Activated CD4-positive, alpha-beta memory T cell treated with anti-CD3 and anti-CD28 coated beads, Interleukin-2, amount 10 ng/mL, durations not matched to agents 7 days and 5 days (primary cell): ENCODE measurements at regions of chr10 and their contacts with region 1.

Region 1: GRCh38 chr10:28991326-28992270 is 297.3 kb upstream of the LYZL1 start:
- DNase-seq: peak; percentile 23
- H3K4me3 Mint-ChIP-seq: no peak overlapping the region
- H3K27ac Mint-ChIP-seq: no peak overlapping the region
- H3K4me1 Mint-ChIP-seq: no peaks in the 10 kb centered on the region
- H3K27me3 Mint-ChIP-seq: no peaks in the 10 kb centered on the region

Region 2: DNA sequence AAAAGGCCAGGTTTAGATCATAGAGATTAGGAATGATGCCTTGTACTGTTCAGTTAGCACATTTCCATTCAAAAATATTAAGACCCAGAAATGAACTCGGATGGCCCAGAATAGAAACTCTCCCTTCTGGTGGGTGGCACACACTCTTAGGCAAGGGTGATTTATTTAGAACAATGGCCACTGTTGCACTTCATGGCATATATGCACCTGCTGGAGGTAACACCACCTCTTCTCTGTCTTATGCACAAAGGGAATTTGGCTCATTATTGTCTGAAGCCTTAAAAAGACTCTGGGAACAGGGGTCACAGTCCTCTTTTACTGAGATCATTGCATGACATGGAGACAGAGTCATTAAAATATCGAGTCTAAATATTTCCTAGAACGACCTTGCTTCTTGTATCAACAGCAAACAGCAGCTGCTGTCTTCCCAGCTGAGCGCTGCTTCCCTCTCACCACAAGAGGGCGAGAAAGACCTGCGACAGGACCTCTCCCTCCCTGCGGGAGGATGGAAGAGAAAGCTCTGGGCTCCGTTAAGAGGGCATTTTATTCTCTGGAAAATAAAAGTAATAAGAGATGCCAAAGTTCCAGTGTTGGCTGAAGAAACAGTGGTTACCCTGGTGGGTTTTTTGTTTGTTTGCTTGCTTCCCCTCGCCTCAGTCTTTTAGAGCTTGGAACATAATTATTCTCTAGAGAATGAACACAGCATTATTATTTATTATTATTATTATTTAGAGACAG is 327.9 kb before region 1 on chr10:
- CTCF ChIA-PET with region 1: interaction called, 30 read pairs
- POLR2A ChIA-PET with region 1: no interaction called
- DNase-seq: peak; percentile 70
- H3K4me3 Mint-ChIP-seq: no peak overlapping the region
- H3K27ac Mint-ChIP-seq: no peak overlapping the region
- H3K4me1 Mint-ChIP-seq: peaks cover 11% of the 10 kb centered on the region
- H3K27me3 Mint-ChIP-seq: peaks cover 36% of the 10 kb centered on the region

Region 3: DNA sequence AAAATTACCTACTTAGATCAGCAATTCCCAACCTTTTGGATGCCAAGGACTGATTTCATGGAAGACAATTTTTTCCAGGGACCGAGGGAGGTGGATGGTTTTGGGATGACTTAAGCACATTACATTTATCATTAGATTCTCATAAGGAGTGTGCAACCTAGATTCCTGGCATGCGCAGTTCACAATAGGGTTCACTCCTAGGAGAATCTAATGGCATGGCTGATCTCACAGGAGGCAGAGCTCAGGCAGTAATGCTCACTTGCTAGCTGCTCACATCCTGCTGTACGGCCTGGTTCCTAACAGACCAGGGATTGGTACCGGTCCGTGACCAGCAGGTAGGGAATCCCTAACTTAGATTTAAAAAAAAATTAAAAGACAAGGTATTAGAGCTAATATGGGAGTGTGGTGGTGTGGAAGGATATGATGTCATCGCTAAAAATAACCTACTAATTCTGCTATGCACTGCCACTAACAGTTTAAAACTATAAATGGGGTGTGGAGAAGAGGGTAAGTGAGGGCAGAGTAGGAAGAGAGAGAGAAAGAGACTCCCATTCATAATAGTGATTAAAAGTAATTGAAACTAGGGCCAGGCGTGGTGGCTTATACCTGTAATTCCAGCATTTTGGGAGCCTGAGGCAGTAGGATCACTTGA is 31.6 kb before region 1 on chr10:
- CTCF ChIA-PET with region 1: no interaction called
- POLR2A ChIA-PET with region 1: no interaction called
- DNase-seq: no peak
- H3K4me3 Mint-ChIP-seq: no peak overlapping the region
- H3K27ac Mint-ChIP-seq: no peak overlapping the region
- H3K4me1 Mint-ChIP-seq: no peaks in the 10 kb centered on the region
- H3K27me3 Mint-ChIP-seq: no peaks in the 10 kb centered on the region

Region 4: GRCh38 chr10:29105531-29106215 is 114.1 kb after region 1 on chr10:
- CTCF ChIA-PET with region 1: no interaction called
- POLR2A ChIA-PET with region 1: no interaction called
- DNase-seq: no peak
- H3K4me3 Mint-ChIP-seq: no peak overlapping the region
- H3K27ac Mint-ChIP-seq: no peak overlapping the region
- H3K4me1 Mint-ChIP-seq: peaks cover 5% of the 10 kb centered on the region
- H3K27me3 Mint-ChIP-seq: no peaks in the 10 kb centered on the region